ENCODE measurements at regions of chr6 and their contacts with region 1.

Region 1: DNA sequence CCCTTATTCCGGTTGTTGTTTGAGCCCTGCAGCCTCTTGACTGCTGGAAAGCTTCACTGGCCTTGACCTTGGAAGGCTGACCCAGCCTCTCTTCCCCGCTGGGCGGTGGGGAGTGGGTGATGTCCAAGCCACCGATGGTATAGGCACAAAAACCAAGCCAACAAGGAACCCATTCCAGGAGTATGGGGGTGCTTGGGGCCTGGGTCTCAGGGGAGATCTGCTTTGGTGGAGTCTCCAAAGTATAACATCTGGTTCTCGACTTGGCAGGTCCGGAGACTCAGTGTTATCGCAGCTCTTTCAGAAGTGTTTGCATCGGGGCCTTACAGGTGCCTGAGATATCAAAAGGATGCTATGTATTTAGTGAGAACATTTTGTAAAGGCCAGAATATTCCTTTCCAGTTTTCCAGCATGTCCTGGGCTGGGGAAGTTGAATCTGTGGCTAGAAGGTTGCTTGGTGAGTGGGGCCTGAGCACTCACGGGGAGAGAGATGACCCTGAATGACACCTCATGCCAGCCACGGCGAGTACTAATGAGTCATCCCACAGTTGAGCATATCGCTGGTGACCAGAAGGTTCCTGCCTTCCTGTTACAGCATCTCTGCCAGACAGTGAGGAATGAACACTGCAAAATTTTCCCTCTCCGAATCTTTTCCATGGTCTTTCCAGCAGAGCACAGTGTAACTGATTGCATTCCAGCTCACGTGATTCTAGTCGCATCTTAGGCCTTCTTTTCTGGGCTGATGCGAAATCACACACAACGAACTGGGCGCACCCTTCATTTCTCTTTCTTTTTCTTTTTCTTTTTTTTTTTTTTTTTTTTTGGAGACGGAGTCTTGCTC is 133.9 kb downstream of the ZDHHC14 start:
- DNase-seq: peak; percentile 69
- ATAC-seq: peak; percentile 57
- H3K4me3 ChIP-seq: no peak overlapping the region
- H3K27ac ChIP-seq: no peak overlapping the region
- H3K4me1 ChIP-seq: peaks cover 7% of the 10 kb centered on the region
- H3K27me3 ChIP-seq: no peaks in the 10 kb centered on the region
- CTCF ChIP-seq: no peak
- POLR2A ChIP-seq: no peak
- RAD21 ChIP-seq: no peak

Region 2: DNA sequence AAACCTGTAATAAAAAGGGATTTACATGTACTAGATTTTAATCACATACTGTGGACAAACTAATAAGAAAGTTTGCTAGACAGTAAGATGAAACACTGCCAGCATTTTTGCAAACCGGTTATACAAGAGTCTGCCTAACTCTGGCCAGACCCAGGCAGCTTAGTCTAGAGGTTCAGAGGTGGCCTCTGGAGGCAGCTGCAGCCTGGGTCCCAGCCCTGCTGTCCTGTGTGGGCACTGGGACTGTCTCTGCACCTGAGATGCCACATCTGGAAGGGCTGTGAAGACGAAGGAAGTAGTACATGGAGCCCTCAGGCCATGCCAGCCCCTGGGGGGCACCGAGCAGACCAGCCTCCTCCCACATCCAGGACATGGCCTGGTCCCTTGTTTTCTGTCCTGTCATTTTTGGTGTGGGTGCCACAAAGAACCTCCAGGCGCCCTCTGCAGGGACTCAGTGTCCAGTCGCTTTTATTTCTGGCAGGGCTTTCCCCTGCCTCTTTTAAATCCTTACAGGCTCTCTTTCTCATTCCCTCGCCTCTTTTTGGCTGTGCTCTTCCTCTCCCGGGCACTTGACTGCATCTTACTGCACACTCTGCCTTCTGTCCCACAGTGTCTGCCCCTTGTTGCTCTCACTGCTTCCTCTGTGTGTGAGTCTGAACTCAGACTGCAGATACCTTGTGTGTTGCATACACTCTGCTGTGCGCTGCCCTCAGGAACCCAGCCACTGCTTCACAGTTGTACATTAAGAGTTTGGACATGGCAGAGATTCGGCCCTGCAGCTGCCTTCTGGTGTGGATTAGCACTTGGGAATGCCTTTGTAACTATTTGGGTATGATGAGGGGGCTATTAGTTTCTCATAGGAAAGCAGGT is 82.8 kb after region 1 on chr6:
- CTCF ChIA-PET with region 1: no interaction called
- POLR2A ChIA-PET with region 1: no interaction called
- dilution Hi-C with region 1: no loop called
- in situ Hi-C with region 1: no loop called
- intact Hi-C with region 1: loop called (anchors 5 kb)
- DNase-seq: no peak
- ATAC-seq: peak; percentile 74
- H3K4me3 ChIP-seq: no peak overlapping the region
- H3K27ac ChIP-seq: peak overlapping the region; percentile 81; the same call in 1 of the 2 replicates
- H3K4me1 ChIP-seq: peaks cover 12% of the 10 kb centered on the region
- H3K27me3 ChIP-seq: no peaks in the 10 kb centered on the region
- CTCF ChIP-seq: peak; percentile 53
- POLR2A ChIP-seq: no peak
- RAD21 ChIP-seq: peak; percentile 59

Measured in IMR-90 (cell line).